ENCODE measurements at regions of chr13 and their contacts with region 1.

Region 1: DNA sequence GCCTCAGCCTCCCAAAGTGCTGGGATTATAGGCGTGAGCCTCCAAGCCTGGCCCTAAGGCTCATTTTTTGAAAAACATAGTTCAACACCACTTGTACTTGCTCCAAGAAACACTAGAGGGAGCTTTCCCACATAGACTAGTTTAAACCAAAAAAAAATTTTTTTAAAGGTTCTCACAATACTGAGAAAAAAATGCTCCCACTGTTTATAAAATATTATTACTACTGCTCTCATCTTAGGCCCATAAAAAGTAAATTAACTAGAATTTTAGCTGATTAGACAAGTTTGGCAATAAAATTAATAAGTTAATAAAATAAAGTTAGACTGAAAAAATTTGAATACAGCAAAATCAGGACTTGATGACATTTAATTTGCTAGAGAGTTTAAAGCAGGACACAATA is 109.5 kb downstream of the TBC1D4 start:
- DNase-seq: peak; percentile 66
- H3K4me3 Mint-ChIP-seq: no peak overlapping the region
- H3K27ac Mint-ChIP-seq: no peak overlapping the region
- H3K4me1 Mint-ChIP-seq: peaks cover 13% of the 10 kb centered on the region
- H3K27me3 Mint-ChIP-seq: no peaks in the 10 kb centered on the region
- CTCF ChIP-seq: peak; percentile 58

Region 2: DNA sequence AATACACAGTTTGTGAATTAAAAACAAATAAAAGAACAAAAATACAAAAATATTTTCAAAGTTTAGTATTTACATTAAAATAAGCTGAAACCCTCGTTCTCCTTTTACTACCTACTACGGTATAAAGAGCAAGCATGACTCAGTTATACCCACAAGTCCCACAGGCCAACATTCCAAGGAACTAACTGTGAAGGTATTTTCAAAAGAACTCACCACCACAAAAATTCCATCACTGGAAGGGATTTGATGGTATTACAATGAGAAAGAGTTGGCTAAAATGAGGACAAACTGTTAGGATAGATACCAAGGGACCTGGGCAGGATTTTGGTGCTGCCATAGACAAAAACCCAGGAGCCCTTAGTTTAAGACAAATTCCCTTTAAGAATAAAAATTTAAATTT is 13.3 kb before region 1 on chr13:
- CTCF ChIA-PET with region 1: interaction called, 10 read pairs
- POLR2A ChIA-PET with region 1: no interaction called
- intact Hi-C with region 1: no loop called
- DNase-seq: peak; percentile 76
- H3K4me3 Mint-ChIP-seq: no peak overlapping the region
- H3K27ac Mint-ChIP-seq: peak overlapping the region; percentile 63
- H3K4me1 Mint-ChIP-seq: peaks cover 29% of the 10 kb centered on the region
- H3K27me3 Mint-ChIP-seq: no peaks in the 10 kb centered on the region
- CTCF ChIP-seq: no peak

Region 3: DNA sequence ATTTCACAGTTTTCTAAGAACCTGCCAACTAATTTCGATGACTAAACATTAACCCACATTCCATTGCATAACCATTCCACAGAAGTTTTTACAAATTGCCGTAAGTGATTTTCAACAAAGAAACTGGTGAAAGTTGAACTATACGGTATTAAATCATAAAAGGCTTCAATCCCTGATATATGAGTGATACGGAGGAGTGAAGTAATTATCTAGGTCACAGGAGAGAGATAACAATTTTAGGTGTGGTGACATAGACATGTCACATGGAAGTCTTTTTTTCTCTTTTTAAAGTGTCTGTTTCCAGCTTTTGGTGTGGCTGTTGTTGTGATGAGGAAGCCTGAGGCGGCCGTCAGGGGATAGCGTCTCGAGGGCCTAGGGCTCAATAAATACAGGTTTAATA is 80.0 kb after region 1 on chr13:
- CTCF ChIA-PET with region 1: interaction called, 9 read pairs
- POLR2A ChIA-PET with region 1: interaction called, 10 read pairs
- intact Hi-C with region 1: no loop called
- DNase-seq: peak; percentile 61
- H3K4me3 Mint-ChIP-seq: peak overlapping the region; percentile 69
- H3K27ac Mint-ChIP-seq: peak overlapping the region; percentile 83
- H3K4me1 Mint-ChIP-seq: peaks cover 23% of the 10 kb centered on the region
- H3K27me3 Mint-ChIP-seq: no peaks in the 10 kb centered on the region
- CTCF ChIP-seq: no peak